ENCODE measurements at regions of chr4 and their contacts with region 1.

Region 1: DNA sequence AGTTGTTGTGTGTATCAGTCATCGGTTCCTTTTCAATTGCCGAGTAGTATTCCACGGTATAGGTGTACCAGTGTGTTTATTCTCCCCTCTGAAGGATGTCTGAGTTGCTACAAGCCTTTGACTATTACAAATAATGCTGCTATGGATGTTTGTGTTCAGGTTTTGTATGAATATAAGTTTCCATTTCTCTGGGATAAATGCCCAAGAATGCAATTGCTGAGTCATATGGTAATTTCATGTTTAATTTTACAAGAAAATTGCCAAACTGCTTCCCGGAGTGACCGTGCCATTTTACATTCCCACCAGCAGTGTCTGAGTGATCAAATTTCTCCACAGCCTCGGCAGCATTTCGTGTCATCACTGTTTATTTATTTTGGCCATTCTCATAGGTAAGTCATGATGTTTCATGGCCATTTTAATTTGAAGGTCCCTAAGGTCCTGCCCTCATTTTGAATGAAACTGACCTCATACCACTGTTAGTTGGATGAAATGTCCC is 73.9 kb downstream of the IRF2 start:
- DNase-seq: peak in 1 of 2 donors; percentile 84
- H3K4me3 ChIP-seq: no peak overlapping the region
- H3K27ac ChIP-seq: peak overlapping the region; percentile 66 to 71
- H3K4me1 ChIP-seq: peaks cover 0 to 25% of the 10 kb centered on the region in 2 donors
- H3K27me3 ChIP-seq: no peaks in the 10 kb centered on the region
- CTCF ChIP-seq: peak in 1 of 3 experiments; percentile 15

Region 2: GRCh38 chr4:184193556-184194525 is 206.6 kb before region 1 on chr4:
- intact Hi-C with region 1: no loop called
- DNase-seq: no peak
- H3K4me3 ChIP-seq: no peak overlapping the region
- H3K27ac ChIP-seq: no peak overlapping the region
- H3K4me1 ChIP-seq: no peaks in the 10 kb centered on the region
- H3K27me3 ChIP-seq: no peaks in the 10 kb centered on the region
- CTCF ChIP-seq: no peak

Region 3: GRCh38 chr4:184263910-184264732 is 136.3 kb before region 1 on chr4:
- intact Hi-C with region 1: loop called (anchors 2 kb)
- DNase-seq: peak; percentile 46 to 98
- H3K4me3 ChIP-seq: no peak overlapping the region
- H3K27ac ChIP-seq: no peak overlapping the region
- H3K4me1 ChIP-seq: peaks cover 0 to 2% of the 10 kb centered on the region in 2 donors
- H3K27me3 ChIP-seq: no peaks in the 10 kb centered on the region
- CTCF ChIP-seq: peak; percentile 83 to 92 (median 90)

Region 4: DNA sequence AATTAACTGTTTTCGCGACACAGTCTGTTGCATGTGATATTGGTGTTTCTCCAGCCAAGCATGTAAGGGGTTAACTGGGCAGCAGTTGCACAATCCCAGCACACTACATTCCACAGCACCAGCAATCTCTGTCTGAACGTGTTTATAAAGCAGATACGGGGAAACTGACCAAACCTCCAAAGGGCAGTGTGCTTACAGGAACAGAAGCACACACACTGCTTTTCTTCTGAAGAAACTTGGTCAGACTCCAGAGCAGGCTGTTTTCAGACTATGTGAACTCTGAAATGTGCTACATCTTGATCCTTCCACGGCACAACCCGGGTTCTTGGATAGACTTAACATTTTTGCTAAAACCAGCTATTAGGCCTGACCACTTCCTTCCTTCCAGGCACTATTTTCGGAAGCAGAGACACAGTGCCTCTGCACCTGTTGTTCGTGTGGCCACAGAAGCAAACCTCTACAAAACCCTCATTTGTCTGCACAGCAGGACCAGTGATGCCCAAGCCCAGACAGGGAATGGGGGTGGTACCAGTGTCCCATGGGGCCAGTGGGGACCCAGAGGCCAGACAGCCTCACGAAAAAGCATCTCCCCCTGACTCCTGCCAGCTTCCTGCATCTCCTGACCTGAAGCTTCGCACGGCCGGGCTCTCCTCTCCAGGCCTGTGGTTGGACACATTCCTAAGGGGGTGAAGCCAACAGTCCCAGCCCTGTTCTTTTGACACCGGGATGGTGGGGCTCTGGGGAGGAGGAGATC is 16.2 kb before region 1 on chr4:
- intact Hi-C with region 1: loop called (anchors 2 kb)
- DNase-seq: peak in 1 of 2 donors; percentile 69
- H3K4me3 ChIP-seq: peak overlapping the region; percentile 34 to 55
- H3K27ac ChIP-seq: peak overlapping the region; percentile 67 to 77
- H3K4me1 ChIP-seq: peaks cover 17 to 28% of the 10 kb centered on the region in 2 donors
- H3K27me3 ChIP-seq: no peaks in the 10 kb centered on the region
- CTCF ChIP-seq: no peak

Region 5: DNA sequence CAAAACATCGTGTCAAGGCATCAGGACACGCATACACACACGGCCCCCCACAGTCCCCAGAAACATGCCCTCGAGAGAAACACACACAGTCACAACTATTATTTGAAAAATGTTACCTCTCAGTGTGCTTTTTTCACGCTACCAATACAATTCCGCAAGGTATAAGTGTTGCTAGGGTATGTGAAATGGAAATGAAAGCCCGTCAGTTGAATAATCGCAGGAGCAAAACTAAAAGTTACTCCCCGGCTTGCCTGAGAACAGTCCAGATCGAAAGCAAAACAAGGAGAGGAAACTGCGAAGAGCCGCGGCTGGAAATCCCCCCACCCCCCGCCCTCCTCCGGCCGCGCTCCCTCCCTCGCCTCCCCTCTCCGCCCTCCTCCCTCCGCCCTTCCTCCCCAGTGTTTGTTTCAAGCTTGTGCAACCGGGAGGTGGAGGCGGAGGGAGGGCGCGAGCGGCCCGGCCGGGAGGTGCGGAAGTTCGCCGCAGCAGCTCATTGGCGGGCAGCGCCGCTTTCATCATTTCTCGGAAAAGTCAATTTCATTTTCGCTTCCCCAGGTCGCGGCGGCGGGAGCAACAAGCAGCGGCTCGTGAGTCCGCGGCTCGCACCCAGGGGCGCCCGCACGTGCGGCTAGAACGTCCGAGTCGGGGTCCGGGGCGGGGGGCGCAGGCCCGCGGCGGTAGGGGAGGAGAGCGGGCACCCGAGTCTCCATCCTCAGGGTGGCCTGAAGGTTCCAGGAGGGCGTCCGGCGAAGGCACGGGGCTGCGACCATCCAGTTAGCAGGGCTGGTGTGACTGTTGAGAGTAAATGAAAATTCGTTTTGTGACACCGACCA is 74.1 kb after region 1 on chr4 and contains the start of gene IRF2:
- intact Hi-C with region 1: loop called (anchors 1 kb)
- DNase-seq: peak; percentile 87 to 98
- H3K4me3 ChIP-seq: peak within 1 kb of the TSS; percentile 89 to 95
- H3K27ac ChIP-seq: peak within 1 kb of the TSS; percentile 96 to 98
- H3K4me1 ChIP-seq: peaks cover 0 to 18% of the 10 kb centered on the region in 2 donors
- H3K27me3 ChIP-seq: no peaks in the 10 kb centered on the region
- CTCF ChIP-seq: peak in 2 of 3 experiments; percentile 7 to 15
- total RNA-seq, gene IRF2: 39.6 TPM

Region 6: GRCh38 chr4:184487513-184487912 is 87.1 kb after region 1 on chr4:
- intact Hi-C with region 1: no loop called
- DNase-seq: no peak
- H3K4me3 ChIP-seq: no peak overlapping the region
- H3K27ac ChIP-seq: no peak overlapping the region
- H3K4me1 ChIP-seq: no peaks in the 10 kb centered on the region
- H3K27me3 ChIP-seq: no peaks in the 10 kb centered on the region
- CTCF ChIP-seq: no peak

Region 7: DNA sequence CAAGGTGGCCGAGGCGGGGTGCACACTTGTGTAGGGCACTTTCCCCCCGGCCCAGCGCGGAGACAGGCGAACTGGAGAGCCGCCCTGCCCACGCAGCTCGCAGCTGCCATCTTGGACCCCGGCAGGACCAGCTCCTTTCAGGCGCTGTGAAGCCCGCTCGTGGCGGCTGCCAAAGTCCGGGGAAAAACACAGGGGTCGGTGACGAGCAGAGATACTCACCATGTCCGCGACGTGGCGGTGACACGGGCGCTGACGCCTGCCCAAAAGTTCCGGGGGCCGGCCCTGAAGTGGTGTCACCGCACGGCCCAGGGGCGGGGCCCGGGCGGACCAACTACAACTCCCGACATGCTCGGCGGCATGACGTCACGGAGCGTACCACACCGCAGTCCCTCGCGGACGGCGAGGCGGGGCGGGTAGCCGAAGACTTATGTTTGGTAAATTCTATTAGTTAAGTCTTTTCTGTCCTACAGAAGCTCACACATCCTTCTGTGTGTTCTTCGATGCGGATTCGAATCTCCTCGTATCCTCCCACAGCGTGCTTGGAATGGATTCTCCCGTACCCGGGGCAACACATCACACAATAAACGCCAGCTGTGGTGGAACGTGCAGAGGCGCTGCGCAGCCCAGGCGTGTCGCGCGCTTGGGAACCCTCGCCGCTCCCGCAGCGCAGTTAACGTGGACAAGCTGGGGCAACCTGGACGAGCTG is 1025.4 kb after region 1 on chr4 and contains the start of gene UFSP2:
- intact Hi-C with region 1: loop called (anchors 5 kb)
- DNase-seq: peak; percentile 69 to 95
- H3K4me3 ChIP-seq: peak within 1 kb of the TSS; percentile 66 to 80
- H3K27ac ChIP-seq: peak within 1 kb of the TSS; percentile 88 to 96
- H3K4me1 ChIP-seq: peaks cover 0 to 15% of the 10 kb centered on the region in 2 donors
- H3K27me3 ChIP-seq: no peaks in the 10 kb centered on the region
- CTCF ChIP-seq: no peak
- total RNA-seq, gene UFSP2: 8.6 TPM

Measured in ascending aorta (tissue), 2 donors.